ENCODE measurements at regions of chr21 and their contacts with region 1.

Region 1: GRCh38 chr21:33444499-33444898 is 35.3 kb downstream of the TMEM50B start:
- DNase-seq: no peak
- H3K4me3 Mint-ChIP-seq: no peak overlapping the region
- H3K27ac Mint-ChIP-seq: no peak overlapping the region
- H3K4me1 Mint-ChIP-seq: peaks cover 4% of the 10 kb centered on the region
- H3K27me3 Mint-ChIP-seq: no peaks in the 10 kb centered on the region

Region 2: GRCh38 chr21:32653311-32653901 is 791.1 kb before region 1 on chr21:
- CTCF ChIA-PET with region 1: no interaction called
- POLR2A ChIA-PET with region 1: no interaction called
- DNase-seq: peak; percentile 38
- H3K4me3 Mint-ChIP-seq: no peak overlapping the region
- H3K27ac Mint-ChIP-seq: no peak overlapping the region
- H3K4me1 Mint-ChIP-seq: peaks cover 3% of the 10 kb centered on the region
- H3K27me3 Mint-ChIP-seq: no peaks in the 10 kb centered on the region

Region 3: GRCh38 chr21:33455686-33456446 is 11.4 kb after region 1 on chr21:
- CTCF ChIA-PET with region 1: interaction called, 11 read pairs
- POLR2A ChIA-PET with region 1: no interaction called
- DNase-seq: no peak
- H3K4me3 Mint-ChIP-seq: no peak overlapping the region
- H3K27ac Mint-ChIP-seq: no peak overlapping the region
- H3K4me1 Mint-ChIP-seq: peaks cover 1% of the 10 kb centered on the region
- H3K27me3 Mint-ChIP-seq: no peaks in the 10 kb centered on the region